Lower leg skin (tissue), 4 donors: ENCODE measurements at regions of chr2 and their contacts with region 1.

Region 1: DNA sequence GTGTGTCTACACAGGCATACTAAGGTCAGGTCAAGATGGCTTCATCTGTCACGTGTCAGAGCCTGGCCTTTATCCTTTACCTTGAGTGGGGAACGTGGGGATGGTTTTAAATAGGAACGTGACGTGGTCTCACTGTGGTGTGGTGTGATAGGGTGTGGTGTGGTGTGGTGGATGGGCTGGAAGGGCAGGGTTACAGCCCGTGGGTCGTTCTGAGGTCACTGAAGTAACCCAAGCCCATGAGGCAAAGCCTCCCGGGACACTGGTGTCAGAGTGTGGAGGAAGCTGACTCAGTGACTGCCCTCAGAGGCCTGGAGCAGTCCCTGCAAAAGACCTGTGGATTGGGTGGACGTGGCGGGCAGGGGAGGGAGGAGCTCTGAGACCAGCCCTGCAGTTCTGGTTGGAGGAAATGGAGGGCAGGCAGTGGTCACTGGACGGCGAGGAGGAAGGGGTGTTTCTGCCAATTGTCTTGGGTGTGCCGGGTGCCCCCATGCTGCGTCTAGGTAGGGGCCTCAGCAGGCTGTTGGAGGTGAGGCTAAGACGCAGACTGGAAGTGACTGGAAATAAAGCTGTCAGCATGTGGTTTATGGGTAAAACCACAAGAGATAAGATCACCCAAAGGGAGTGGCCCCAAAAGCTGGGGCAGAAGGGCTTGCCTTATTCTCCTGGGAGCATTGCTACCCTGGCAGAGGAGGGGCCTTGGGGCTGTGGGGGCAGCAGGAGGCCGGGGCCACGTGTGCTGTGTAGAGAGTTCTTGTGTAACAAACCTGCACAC is 84.8 kb downstream of the SH3RF3 start:
- DNase-seq: peak in 1 of 2 donors; percentile 74
- H3K4me3 ChIP-seq: no peak overlapping the region
- CTCF ChIP-seq: no peak
- POLR2A ChIP-seq: no peak

Region 2: DNA sequence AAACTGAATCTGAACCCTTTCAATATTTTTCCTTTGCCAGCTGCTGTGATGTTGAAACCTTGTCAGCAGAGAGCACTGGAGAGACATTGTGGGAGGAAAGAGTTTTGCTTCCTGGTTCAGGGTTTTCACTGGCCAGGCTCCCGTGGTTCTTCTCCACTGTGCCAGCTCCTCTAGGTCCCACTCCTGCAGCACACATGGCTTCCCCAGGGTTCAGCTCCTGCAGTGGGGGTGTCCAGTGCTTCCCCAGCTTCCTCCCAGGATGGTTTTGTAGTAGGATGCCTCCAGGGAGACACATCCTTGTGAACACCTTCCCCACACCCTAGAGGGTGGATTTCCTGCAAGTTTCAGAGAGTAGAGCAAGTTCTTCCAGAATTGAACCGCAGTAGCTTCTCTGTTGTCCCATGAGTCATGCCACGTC is 998.0 kb before region 1 on chr2:
- intact Hi-C with region 1: loop called (anchors 5 kb)
- DNase-seq: no peak
- H3K4me3 ChIP-seq: no peak overlapping the region
- CTCF ChIP-seq: no peak
- POLR2A ChIP-seq: no peak

Region 3: GRCh38 chr2:108385411-108386071 is 828.3 kb before region 1 on chr2:
- intact Hi-C with region 1: no loop called
- DNase-seq: no peak
- H3K4me3 ChIP-seq: no peak overlapping the region
- CTCF ChIP-seq: no peak
- POLR2A ChIP-seq: no peak